ENCODE measurements at regions of chr4 and their contacts with region 1.

Region 1: GRCh38 chr4:74189331-74190043 is 31.6 kb downstream of the MTHFD2L start:
- DNase-seq: peak; percentile 44
- H3K4me3 ChIP-seq: no peak overlapping the region
- H3K27ac ChIP-seq: no peak overlapping the region
- H3K4me1 ChIP-seq: no peaks in the 10 kb centered on the region
- H3K27me3 ChIP-seq: no peaks in the 10 kb centered on the region
- CTCF ChIP-seq: peak; percentile 71 to 73

Region 2: GRCh38 chr4:73540826-73541225 is 648.7 kb before region 1 on chr4:
- CTCF ChIA-PET with region 1: no interaction called
- dilution Hi-C with region 1: no loop called
- in situ Hi-C with region 1: no loop called
- intact Hi-C with region 1: no loop called
- DNase-seq: no peak
- H3K4me3 ChIP-seq: no peak overlapping the region
- H3K27ac ChIP-seq: no peak overlapping the region
- H3K4me1 ChIP-seq: no peaks in the 10 kb centered on the region
- H3K27me3 ChIP-seq: no peaks in the 10 kb centered on the region
- CTCF ChIP-seq: no peak

Region 3: GRCh38 chr4:74228691-74229640 is 39.5 kb after region 1 on chr4:
- CTCF ChIA-PET with region 1: interaction called, 4 read pairs
- dilution Hi-C with region 1: no loop called
- in situ Hi-C with region 1: no loop called
- intact Hi-C with region 1: loop called (anchors 2 kb)
- DNase-seq: peak; percentile 68
- H3K4me3 ChIP-seq: no peak overlapping the region
- H3K27ac ChIP-seq: no peak overlapping the region
- H3K4me1 ChIP-seq: peaks cover 15% of the 10 kb centered on the region
- H3K27me3 ChIP-seq: no peaks in the 10 kb centered on the region
- CTCF ChIP-seq: peak; percentile 84 to 88

Region 4: GRCh38 chr4:74283614-74284013 is 94.1 kb after region 1 on chr4:
- CTCF ChIA-PET with region 1: no interaction called
- dilution Hi-C with region 1: loop called (anchors 5 kb)
- in situ Hi-C with region 1: no loop called
- intact Hi-C with region 1: no loop called
- DNase-seq: peak; percentile 97
- H3K4me3 ChIP-seq: peak overlapping the region in 2 of 3 experiments; percentile 28 to 30
- H3K27ac ChIP-seq: peak overlapping the region; percentile 81
- H3K4me1 ChIP-seq: peaks cover 24% of the 10 kb centered on the region
- H3K27me3 ChIP-seq: no peaks in the 10 kb centered on the region
- CTCF ChIP-seq: no peak

Region 5: GRCh38 chr4:74444891-74445642 is 255.6 kb after region 1 on chr4 and contains the start of gene AREG:
- CTCF ChIA-PET with region 1: no interaction called
- dilution Hi-C with region 1: no loop called
- in situ Hi-C with region 1: no loop called
- intact Hi-C with region 1: loop called (anchors 2 kb)
- DNase-seq: peak; percentile 92
- H3K4me3 ChIP-seq: peak within 1 kb of the TSS; percentile 83 to 93 (median 93)
- H3K27ac ChIP-seq: peak within 1 kb of the TSS; percentile 99
- H3K4me1 ChIP-seq: peaks cover 34% of the 10 kb centered on the region
- H3K27me3 ChIP-seq: no peaks in the 10 kb centered on the region
- CTCF ChIP-seq: peak; percentile 24 to 63
- total RNA-seq, gene AREG: 540 to 2,145 TPM